ENCODE measurements at regions of chr10 and their contacts with region 1.

Region 1: GRCh38 chr10:89019569-89020327 is 29.1 kb downstream of the FAS start:
- DNase-seq: no peak
- H3K4me3 ChIP-seq: no peak overlapping the region
- H3K27ac ChIP-seq: no peak overlapping the region
- H3K4me1 ChIP-seq: no peaks in the 10 kb centered on the region
- H3K27me3 ChIP-seq: no peaks in the 10 kb centered on the region
- CTCF ChIP-seq: no peak
- POLR2A ChIP-seq: no peak

Region 2: DNA sequence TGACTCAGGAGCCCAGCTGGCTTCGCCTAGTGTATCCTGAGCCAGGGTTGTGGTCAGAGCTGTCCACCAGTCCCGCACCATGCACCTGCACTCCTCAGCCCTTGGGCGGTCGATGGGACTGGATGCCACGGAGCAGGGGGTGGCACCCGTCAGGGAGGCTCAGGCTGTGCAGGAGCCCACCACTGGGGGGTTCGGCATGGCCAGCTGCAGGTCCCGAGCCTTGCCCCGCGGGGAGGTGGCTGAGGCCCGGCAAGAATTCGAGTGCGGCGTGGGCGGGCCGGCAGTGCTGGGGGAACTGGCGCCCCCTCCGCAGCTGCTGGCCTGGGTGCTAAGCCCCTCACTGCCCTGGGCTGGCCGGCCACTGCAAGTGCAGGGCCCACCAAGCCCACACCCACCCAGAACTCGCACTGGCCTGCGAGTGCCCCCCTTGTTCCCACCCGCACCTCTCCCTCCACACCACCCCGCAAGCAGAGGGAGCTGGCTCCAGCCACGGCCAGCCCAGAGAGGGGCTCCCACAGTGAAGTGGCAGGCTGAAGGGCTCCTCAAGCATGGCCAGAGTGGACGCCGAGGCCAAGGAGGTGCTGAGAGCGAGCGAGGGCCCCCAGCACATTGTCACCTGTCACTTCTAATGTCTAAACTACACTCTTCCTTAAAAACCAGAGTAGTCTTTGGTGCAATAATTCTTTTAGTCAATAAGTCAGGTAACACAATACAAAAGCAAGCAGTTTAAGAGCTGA is 1988.7 kb before region 1 on chr10:
- intact Hi-C with region 1: loop called (anchors 10 kb)
- DNase-seq: no peak
- H3K4me3 ChIP-seq: no peak overlapping the region
- H3K27ac ChIP-seq: no peak overlapping the region
- H3K4me1 ChIP-seq: no peaks in the 10 kb centered on the region
- H3K27me3 ChIP-seq: no peaks in the 10 kb centered on the region
- CTCF ChIP-seq: no peak
- POLR2A ChIP-seq: no peak

Region 3: DNA sequence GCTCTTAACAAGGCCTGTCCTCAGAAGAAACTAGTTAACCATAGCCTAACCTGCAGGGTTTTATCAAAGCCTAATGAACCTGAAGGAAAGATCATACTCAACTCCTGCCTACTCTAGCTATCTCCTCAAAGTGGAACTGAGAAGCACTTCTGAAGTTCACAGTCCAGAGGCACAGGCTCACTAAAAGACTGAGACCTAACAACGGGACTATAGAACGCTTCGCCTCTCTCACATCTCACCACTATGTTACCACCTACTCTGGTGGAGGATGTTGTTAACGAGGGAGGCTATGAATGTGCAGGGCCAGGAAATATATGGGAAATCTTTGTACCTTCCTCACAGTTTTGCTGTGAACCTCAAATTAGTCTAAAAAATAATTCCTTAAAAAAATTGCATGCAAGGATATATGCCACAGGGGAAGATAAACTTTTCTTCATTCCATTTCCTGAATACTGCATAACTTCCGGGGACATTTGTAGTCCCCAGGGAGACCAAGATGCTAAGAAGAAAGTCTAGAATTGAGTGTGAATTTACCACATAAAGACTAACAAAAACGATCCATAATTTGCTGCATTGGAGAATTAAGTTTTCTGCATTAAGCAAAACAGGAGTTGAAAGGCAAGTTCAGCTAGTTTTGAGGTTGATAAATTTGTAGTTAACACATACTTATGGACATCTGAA is 411.6 kb before region 1 on chr10:
- intact Hi-C with region 1: no loop called
- DNase-seq: no peak
- H3K4me3 ChIP-seq: no peak overlapping the region
- H3K27ac ChIP-seq: no peak overlapping the region
- H3K4me1 ChIP-seq: no peaks in the 10 kb centered on the region
- H3K27me3 ChIP-seq: no peaks in the 10 kb centered on the region
- CTCF ChIP-seq: no peak
- POLR2A ChIP-seq: no peak

Region 4: GRCh38 chr10:89074120-89074519 is 54.4 kb after region 1 on chr10:
- intact Hi-C with region 1: no loop called
- DNase-seq: peak in 1 of 2 donors; percentile 50
- H3K4me3 ChIP-seq: no peak overlapping the region
- H3K27ac ChIP-seq: peak overlapping the region; percentile 14 to 46
- H3K4me1 ChIP-seq: no peaks in the 10 kb centered on the region
- H3K27me3 ChIP-seq: no peaks in the 10 kb centered on the region
- CTCF ChIP-seq: no peak
- POLR2A ChIP-seq: no peak

Measured in breast epithelium (tissue), 4 donors.